ENCODE measurements at regions of chr10 and their contacts with region 1.

Region 1: DNA sequence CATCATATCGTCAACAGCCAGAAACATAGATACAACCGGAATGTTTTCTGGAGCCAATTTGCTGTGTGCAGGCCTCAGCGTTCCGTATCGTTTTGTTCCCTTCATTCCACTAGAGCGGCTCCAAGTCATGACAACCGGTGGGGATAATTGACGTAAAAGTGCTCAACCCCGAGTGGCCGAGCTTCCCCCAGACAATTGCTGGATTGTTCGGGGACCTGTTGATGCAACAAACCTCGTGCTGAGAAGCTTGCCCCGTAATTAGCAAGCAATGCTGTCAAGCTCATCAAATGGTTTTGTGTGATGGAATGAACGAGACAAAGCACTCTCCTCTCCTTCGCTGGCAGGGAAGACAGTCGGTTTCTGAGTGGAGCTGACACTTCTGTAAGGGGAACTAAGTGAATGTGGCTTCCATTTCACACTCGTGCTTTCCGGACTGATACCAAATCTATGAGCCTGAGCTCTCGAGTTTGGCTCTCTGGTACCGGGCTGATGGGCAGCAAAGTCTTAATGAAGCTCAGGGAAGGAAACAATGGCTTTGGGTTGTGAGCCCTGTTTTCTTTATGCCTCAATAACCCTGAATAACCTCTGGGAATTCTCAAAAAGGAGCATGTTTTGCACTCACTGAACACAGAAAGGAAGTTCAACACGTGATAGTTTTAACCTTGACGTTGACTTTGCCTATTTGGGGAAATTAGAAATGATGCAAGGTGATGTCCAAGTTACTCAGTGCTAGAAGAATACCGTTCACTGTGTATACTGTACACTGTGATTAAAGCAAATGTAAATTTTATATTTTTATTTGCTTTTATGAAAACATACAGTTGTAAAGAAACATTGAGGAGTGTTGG is 220.5 kb downstream of the BAMBI start:
- DNase-seq: peak; percentile 75
- ATAC-seq: peak; percentile 93 to 95

Region 2: GRCh38 chr10:28676968-28677887 is 220.6 kb before region 1 on chr10 and contains the start of gene BAMBI:
- intact Hi-C with region 1: loop called in 1 of 2 experiments (anchors 5 kb)
- DNase-seq: peak; percentile 93
- ATAC-seq: peak; percentile 98
- total RNA-seq, gene BAMBI: 23.7 to 54.8 TPM

Region 3: GRCh38 chr10:28839600-28840007 is 58.2 kb before region 1 on chr10:
- intact Hi-C with region 1: loop called in 1 of 2 experiments (anchors 2 kb)
- DNase-seq: peak; percentile 57
- ATAC-seq: peak; percentile 90 to 95

Region 4: GRCh38 chr10:28853195-28853594 is 44.6 kb before region 1 on chr10:
- intact Hi-C with region 1: no loop called
- DNase-seq: no peak
- ATAC-seq: peak in 1 of 2 donors; percentile 30

Region 5: DNA sequence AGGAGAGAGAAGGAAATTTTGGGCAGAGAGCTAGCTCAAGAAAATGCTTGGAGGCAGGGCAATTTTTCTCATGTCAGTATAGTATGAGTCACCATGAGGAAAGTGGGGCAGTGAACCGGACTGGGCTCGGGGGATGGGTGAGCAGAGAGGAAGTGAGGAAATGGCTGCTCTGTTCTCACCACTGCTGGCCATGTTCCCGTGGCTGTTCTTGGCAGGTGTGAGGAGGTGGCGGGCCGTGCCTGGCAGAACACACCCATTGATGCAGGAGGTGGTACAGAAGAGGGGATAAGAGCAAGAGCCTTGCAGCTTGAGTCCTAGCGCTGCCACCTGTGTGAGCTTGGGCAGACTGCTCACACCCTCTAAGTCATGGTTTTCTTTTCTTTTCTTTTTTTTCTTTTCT is 86.6 kb after region 1 on chr10:
- intact Hi-C with region 1: loop called in 1 of 2 experiments (anchors 2 kb)
- DNase-seq: peak; percentile 94
- ATAC-seq: peak; percentile 95 to 98

Measured in left cardiac atrium (tissue), 4 donors.